ENCODE measurements at regions of chr1 and their contacts with region 1.

Region 1: GRCh38 chr1:246959944-246960693 is 28.4 kb upstream of the AHCTF1 start:
- DNase-seq: no peak
- ATAC-seq: peak in 1 of 8 donors; percentile 58
- H3K4me3 ChIP-seq: peak overlapping the region in 1 of 10 donors; percentile 6
- H3K27ac ChIP-seq: peak overlapping the region in 1 of 10 donors; percentile 88
- H3K4me1 ChIP-seq: peaks cover 0 to 38% (median 0%) of the 10 kb centered on the region in 9 donors
- H3K27me3 ChIP-seq: no peaks in the 10 kb centered on the region
- CTCF ChIP-seq: peak in 4 of 9 donors; percentile 23 to 27 (median 25)

Region 2: DNA sequence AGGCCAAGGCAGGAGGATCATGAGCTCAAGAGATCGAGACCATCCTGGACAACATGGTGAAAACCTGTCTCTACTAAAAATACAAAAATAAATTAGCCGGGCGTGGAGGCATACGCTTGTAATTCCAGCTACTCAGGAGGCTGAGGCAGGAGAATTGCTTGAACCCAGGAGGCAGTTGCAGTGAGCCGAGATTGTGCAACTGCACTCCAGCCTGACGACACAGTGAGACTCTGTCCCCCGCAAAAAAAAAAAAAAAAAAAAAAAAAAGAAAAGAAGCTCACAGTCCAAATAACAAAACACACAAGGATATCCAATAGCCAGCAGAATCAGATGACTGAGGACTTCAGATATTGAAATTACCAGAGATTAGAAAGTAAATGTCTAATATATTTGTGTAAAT is 40.2 kb before region 1 on chr1:
- intact Hi-C with region 1: loop called in 1 of 10 experiments (anchors 10 kb)
- DNase-seq: no peak
- ATAC-seq: no peak
- H3K4me3 ChIP-seq: no peak overlapping the region
- H3K27ac ChIP-seq: no peak overlapping the region
- H3K4me1 ChIP-seq: peaks cover 0 to 44% (median 26%) of the 10 kb centered on the region in 9 donors
- H3K27me3 ChIP-seq: no peaks in the 10 kb centered on the region
- CTCF ChIP-seq: no peak

Region 3: GRCh38 chr1:247096544-247096943 is 136.4 kb after region 1 on chr1:
- intact Hi-C with region 1: no loop called
- DNase-seq: no peak
- ATAC-seq: no peak
- H3K4me3 ChIP-seq: no peak overlapping the region
- H3K27ac ChIP-seq: no peak overlapping the region
- H3K4me1 ChIP-seq: no peaks in the 10 kb centered on the region
- H3K27me3 ChIP-seq: no peaks in the 10 kb centered on the region
- CTCF ChIP-seq: no peak

Measured in heart right ventricle (tissue), 16 donors.